Activated T-helper 1 cell treated with anti-CD3 and anti-CD28 coated beads, Interleukin-12 subunit alpha, Interleukin-12 subunit beta, Interleukin-2, Interleukin-4 antibody, amounts not matched to agents 30 ng/mL and 10 ng/mL and 1 ng/mL, durations not matched to agents 14 hours and 24 hours and 36 hours (primary cell): ENCODE measurements at regions of chr11 and their contacts with region 1.

Region 1: GRCh38 chr11:108754901-108755632 is 90.2 kb downstream of the DDX10 start:
- DNase-seq: no peak
- H3K4me3 Mint-ChIP-seq: no peak overlapping the region
- H3K27ac Mint-ChIP-seq: no peak overlapping the region
- H3K4me1 Mint-ChIP-seq: peaks cover 15% of the 10 kb centered on the region
- H3K27me3 Mint-ChIP-seq: no peaks in the 10 kb centered on the region

Region 2: DNA sequence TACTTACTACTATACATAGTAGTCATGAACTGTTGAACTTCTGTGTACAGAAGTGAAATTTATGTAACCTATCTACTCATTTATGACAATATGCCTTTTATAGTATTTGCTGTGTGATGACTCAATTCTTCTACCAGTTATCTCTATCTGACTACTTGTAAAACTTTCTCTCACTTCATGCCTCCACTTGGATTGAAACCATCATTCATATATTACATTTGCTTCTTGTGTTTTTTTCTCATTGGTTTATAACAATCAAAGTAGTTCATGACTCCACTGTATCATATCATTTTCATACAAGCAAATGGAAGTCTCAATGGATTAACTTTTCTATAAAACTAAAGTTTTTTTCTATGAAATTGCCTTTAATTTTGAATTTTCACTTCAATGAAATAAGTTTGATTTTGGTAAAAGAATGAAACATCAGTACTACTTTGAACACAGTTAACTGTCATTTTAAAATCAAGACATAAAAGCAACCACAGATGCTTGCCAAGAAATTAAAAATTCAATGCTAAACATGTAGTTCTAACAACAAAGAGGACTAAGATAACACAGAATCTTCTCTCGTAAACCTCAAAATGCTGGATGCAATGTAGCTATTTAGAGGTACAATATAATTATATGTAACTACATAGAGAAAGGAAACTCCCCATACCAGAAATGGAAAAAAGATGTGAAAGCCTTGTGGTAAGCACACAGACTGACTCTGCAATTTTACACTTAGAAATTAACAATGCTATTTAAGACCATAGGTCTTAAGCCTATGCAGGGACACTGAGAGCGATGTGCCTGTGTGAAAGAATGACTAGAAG is 133.9 kb before region 1 on chr11:
- intact Hi-C with region 1: loop called (anchors 5 kb)
- DNase-seq: no peak
- H3K4me3 Mint-ChIP-seq: no peak overlapping the region
- H3K27ac Mint-ChIP-seq: no peak overlapping the region
- H3K4me1 Mint-ChIP-seq: peaks cover 18% of the 10 kb centered on the region
- H3K27me3 Mint-ChIP-seq: peaks cover 7% of the 10 kb centered on the region

Region 3: GRCh38 chr11:108727665-108728064 is 27.4 kb before region 1 on chr11:
- intact Hi-C with region 1: no loop called
- DNase-seq: no peak
- H3K4me3 Mint-ChIP-seq: peak overlapping the region; percentile 5
- H3K27ac Mint-ChIP-seq: peak overlapping the region; percentile 19
- H3K4me1 Mint-ChIP-seq: peaks cover 47% of the 10 kb centered on the region
- H3K27me3 Mint-ChIP-seq: no peaks in the 10 kb centered on the region

Region 4: DNA sequence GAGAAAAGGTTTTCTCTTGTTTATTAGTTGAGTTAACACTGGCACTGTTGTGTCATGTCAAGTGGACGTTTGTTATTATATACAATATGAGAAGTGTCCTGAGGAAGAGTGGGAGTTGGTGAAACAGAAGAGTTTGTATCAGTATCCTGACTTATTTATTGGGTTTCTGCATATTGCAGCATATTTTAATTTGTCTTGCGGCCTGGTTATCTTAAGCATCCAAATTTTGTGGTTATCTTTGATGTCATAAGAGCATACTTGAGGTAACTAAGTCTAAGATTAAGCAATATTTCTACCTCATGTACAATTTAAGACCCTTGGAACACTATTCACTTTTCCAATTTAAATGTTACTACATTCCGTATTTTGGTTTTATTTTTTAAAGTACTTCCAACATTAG is 13.3 kb after region 1 on chr11:
- intact Hi-C with region 1: no loop called
- DNase-seq: no peak
- H3K4me3 Mint-ChIP-seq: no peak overlapping the region
- H3K27ac Mint-ChIP-seq: no peak overlapping the region
- H3K4me1 Mint-ChIP-seq: no peaks in the 10 kb centered on the region
- H3K27me3 Mint-ChIP-seq: no peaks in the 10 kb centered on the region